Activated CD4-positive, alpha-beta memory T cell treated with anti-CD3 and anti-CD28 coated beads for 36 hours (primary cell): ENCODE measurements at regions of chr2 and their contacts with region 1.

Region 1: GRCh38 chr2:53786705-53787612 is at the starts of genes ASB3 and ERLEC1:
- DNase-seq: peak; percentile 93
- H3K4me3 Mint-ChIP-seq: peak within 1 kb of the TSS; percentile 98
- H3K27ac Mint-ChIP-seq: peak within 1 kb of the TSS; percentile 94
- H3K4me1 Mint-ChIP-seq: peaks cover 46% of the 10 kb centered on the region
- H3K27me3 Mint-ChIP-seq: no peaks in the 10 kb centered on the region
- total RNA-seq, gene ASB3: 21.1 to 21.9 TPM
- total RNA-seq, gene ERLEC1: 26.7 to 27.0 TPM

Region 2: DNA sequence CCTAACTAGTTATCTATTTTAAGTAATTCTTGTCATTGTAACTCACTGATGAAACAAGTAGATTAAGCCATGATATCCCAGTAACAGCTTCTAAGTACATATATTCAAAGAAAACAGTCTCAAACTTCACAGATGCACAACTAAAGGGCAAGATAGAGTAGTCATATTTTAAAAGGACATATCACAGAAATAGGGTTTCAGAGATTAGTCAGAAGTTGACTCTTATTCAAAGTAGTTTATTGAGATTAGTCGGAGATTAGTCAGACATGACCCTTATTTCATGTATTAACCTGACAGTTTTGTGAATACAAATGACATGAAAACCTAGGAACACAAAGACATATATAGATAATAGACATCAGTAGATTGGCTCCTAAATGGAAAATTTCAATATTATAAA is 35.2 kb before region 1 on chr2:
- CTCF ChIA-PET with region 1: no interaction called
- POLR2A ChIA-PET with region 1: no interaction called
- intact Hi-C with region 1: loop called (anchors 1 kb)
- DNase-seq: no peak
- H3K4me3 Mint-ChIP-seq: no peak overlapping the region
- H3K27ac Mint-ChIP-seq: no peak overlapping the region
- H3K4me1 Mint-ChIP-seq: peaks cover 24% of the 10 kb centered on the region
- H3K27me3 Mint-ChIP-seq: no peaks in the 10 kb centered on the region

Region 3: DNA sequence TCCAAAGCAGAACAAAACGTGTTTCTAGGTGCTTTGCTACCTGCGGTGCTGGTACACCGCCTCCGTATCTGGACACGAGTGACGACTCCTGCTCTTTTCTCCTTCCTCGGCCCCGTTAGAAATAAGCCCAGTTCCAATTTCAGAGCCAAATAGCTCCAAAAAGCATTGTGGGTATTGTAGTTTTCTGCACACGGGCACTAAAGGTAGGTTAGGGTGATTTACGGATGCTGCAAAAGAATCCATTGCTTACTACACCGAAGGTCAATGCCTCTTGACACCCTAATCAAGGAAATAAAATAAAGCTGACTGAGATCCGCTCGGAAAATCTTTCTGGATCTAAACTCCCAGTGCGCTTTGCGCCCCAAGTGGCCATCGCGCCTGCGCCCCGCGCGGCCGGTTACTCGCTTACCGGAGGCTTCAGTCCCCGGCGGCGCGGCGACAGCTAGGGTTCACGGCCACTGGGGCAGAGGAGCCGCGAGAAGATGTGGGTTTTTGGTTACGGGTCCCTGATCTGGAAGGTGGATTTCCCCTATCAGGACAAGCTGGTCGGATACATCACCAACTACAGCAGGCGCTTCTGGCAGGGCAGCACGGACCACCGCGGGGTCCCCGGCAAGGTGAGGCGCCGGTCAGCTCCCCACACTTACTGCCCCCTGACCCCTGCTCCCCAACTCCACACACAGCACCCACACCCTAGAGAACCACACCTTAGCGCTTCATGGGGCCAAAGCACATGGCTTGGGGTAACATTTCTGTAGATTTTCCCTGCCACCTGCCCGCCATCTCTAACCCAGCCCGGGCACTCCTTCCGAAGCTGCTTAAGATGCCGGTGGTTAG is 19.3 kb before region 1 on chr2 and contains the start of gene CHAC2:
- CTCF ChIA-PET with region 1: interaction called, 10 read pairs
- POLR2A ChIA-PET with region 1: interaction called, 43 read pairs
- intact Hi-C with region 1: loop called (anchors 1 kb)
- DNase-seq: peak; percentile 91
- H3K4me3 Mint-ChIP-seq: peak within 1 kb of the TSS; percentile 93
- H3K27ac Mint-ChIP-seq: peak within 1 kb of the TSS; percentile 97
- H3K4me1 Mint-ChIP-seq: peaks cover 27% of the 10 kb centered on the region
- H3K27me3 Mint-ChIP-seq: no peaks in the 10 kb centered on the region
- total RNA-seq, gene CHAC2: 13.2 to 15.0 TPM

Region 4: DNA sequence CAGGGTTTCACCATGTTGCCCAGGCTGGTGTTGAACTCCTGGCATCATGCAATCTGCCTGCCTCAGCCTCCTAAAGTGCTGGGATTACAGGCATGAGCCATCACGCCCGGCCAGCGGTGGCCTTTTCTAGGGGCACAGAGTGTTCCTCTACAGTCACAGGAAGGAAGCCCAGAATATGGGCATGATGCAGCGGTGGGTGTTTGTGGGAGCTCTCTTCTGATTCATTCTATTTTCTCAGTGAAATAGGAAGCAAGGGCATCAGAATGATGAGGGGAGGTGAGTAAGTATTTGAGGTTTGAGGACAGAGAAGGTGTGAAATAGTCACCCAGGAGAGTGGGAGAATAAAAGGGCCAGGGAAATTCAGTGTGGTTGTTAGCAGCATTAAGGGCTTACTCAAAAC is 254.2 kb after region 1 on chr2:
- CTCF ChIA-PET with region 1: no interaction called
- POLR2A ChIA-PET with region 1: no interaction called
- intact Hi-C with region 1: loop called (anchors 5 kb)
- DNase-seq: peak; percentile 79
- H3K4me3 Mint-ChIP-seq: no peak overlapping the region
- H3K27ac Mint-ChIP-seq: no peak overlapping the region
- H3K4me1 Mint-ChIP-seq: peaks cover 3% of the 10 kb centered on the region
- H3K27me3 Mint-ChIP-seq: no peaks in the 10 kb centered on the region

Region 5: DNA sequence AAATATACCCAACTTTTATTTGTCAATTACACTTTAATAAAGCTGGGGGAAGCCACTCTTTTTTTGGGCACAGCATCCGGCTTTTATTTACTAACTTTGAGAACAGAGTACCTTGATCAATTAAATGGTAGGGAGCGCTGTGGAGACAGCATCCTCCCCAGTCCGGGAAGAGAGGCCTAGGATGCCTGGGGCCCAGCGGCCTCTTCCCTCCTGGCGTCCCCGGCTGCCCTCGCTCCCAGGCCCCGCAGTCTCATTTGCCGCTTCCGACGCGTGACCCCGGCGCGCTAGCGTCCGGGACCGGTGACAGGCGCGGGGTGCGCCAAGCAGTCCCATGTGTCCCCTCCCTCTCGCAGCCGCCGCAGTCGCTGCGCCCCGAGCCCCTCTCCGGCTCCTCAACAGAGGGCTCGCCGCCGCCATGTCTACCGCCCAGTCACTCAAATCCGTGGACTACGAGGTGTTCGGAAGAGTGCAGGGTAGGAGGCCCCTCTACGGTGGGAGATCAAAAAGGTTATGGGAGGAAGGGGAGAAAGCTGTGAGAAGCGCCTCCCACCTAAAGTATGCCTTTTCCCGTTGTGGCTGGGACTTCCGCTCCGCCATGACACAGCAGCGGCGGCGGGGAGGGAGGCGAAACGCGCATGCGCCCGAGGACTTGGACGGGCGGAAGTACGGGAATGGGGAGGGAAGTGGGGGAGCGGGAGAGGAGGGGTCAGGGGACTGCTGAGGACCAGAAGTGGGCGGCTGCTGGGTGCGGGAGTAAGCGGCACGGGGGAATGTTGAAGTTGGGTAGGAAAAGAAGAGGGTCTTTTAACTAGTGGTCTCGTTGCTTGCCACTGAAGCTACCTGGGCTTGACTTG is 328.6 kb after region 1 on chr2 and contains the start of gene ACYP2:
- CTCF ChIA-PET with region 1: no interaction called
- POLR2A ChIA-PET with region 1: interaction called, 3 read pairs
- intact Hi-C with region 1: loop called (anchors 1 kb)
- DNase-seq: peak; percentile 95
- H3K4me3 Mint-ChIP-seq: peak within 1 kb of the TSS; percentile 94
- H3K27ac Mint-ChIP-seq: peak within 1 kb of the TSS; percentile 99
- H3K4me1 Mint-ChIP-seq: peaks cover 13% of the 10 kb centered on the region
- H3K27me3 Mint-ChIP-seq: no peaks in the 10 kb centered on the region
- total RNA-seq, gene ACYP2: 5.6 to 6.4 TPM

Region 6: DNA sequence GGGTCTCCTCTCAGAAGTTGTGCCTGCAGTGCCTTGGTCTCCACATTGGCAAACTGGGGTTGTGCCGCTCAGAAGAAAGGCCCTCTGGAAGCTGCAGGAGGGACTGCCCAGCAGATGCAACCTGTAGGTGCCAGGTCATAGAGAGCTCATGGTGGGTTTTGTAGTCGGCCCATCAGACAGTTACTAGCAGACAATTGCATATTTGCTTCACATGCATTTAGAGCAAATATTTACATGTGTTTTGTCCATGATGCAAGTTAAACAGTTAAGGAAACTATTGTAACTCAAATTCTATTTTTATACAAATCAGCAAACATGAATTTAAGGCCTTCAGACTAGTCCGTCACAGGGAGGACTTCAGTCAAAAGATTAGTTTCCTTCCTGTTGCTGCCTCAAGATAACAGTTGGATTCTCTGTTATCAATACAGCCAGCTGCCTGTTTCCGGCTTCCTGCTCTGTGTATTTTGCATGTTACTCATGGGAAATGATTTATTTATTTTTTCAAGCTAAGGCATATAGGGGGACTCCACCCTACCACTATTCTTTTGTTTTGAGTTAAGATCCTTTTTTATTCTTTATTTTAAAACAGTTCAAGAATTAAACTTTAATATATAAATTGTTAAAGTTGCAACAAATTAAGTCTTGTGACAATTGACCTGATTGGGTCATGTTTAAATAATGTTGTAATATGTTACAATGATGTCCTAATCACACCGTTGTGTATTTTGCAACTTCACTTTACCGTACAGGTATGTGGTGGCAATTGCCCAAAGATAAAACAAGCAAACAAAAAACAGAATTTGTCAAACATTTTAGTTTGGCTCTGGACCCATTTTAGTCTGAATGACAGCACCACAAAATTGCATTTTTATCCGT is 802.6 kb after region 1 on chr2:
- CTCF ChIA-PET with region 1: no interaction called
- POLR2A ChIA-PET with region 1: no interaction called
- intact Hi-C with region 1: no loop called
- DNase-seq: peak; percentile 60
- H3K4me3 Mint-ChIP-seq: peak overlapping the region; percentile 48
- H3K27ac Mint-ChIP-seq: peak overlapping the region; percentile 94
- H3K4me1 Mint-ChIP-seq: peaks cover 87% of the 10 kb centered on the region
- H3K27me3 Mint-ChIP-seq: no peaks in the 10 kb centered on the region